GM12878 (cell line): ENCODE measurements at regions of chr6 and their contacts with region 1.

Region 1: GRCh38 chr6:109083657-109084056 is 11.0 kb downstream of the SESN1 start:
- DNase-seq: no peak
- ATAC-seq: no peak; the same call in 2 of the 3 replicates
- H3K4me3 ChIP-seq: no peak overlapping the region
- H3K27ac ChIP-seq: no peak overlapping the region
- H3K4me1 ChIP-seq: no peaks in the 10 kb centered on the region
- H3K27me3 ChIP-seq: no peaks in the 10 kb centered on the region
- CTCF ChIP-seq: no peak
- EP300 ChIP-seq: no peak
- POLR2A ChIP-seq: no peak
- RAD21 ChIP-seq: no peak

Region 2: DNA sequence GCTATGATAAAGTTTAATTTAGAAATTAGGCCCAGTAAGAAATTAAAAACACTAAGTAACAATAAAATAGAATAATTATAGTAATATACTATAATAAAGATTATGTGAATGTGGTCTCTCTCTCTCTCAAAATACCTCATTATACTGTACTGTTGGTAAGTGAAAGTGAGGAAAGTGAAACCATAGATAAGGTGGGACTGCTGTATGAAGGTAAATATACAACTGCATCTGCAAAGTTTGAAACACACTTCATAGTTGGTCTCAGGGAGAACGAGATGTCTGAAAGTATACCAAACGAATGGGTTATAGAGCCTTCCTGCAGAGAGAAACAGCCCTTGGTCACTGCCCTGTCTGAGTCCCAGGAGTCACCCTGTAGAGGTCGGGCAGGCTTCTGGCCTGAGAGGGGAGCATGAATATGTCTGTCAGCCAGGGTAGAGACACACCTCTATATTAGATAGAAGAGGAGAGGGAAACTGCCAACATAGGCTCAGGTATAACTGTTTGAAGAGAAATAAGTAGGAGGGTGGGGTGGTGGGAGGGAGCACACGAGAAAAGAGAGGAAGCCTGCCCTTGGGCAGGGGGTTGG is 20.8 kb before region 1 on chr6:
- CTCF ChIA-PET with region 1: no interaction called
- POLR2A ChIA-PET with region 1: no interaction called
- RAD21 ChIA-PET with region 1: no interaction called
- SMC1A ChIA-PET with region 1: no interaction called
- in situ Hi-C with region 1: no loop called
- intact Hi-C with region 1: no loop called
- DNase-seq: no peak
- ATAC-seq: no peak
- H3K4me3 ChIP-seq: no peak overlapping the region
- H3K27ac ChIP-seq: no peak overlapping the region
- H3K4me1 ChIP-seq: no peaks in the 10 kb centered on the region
- H3K27me3 ChIP-seq: no peaks in the 10 kb centered on the region; a peak in 2 of 4 replicates
- CTCF ChIP-seq: no peak
- EP300 ChIP-seq: no peak
- POLR2A ChIP-seq: no peak
- RAD21 ChIP-seq: no peak

Region 3: GRCh38 chr6:109095027-109095834 is 11.6 kb after region 1 on chr6 and contains the start of gene CEP57L1:
- CTCF ChIA-PET with region 1: interaction called, 4 read pairs
- POLR2A ChIA-PET with region 1: interaction called, 6 read pairs
- RAD21 ChIA-PET with region 1: interaction called, 3 read pairs
- SMC1A ChIA-PET with region 1: interaction called, 13 read pairs
- in situ Hi-C with region 1: no loop called
- intact Hi-C with region 1: no loop called
- DNase-seq: peak; percentile 88
- ATAC-seq: peak; percentile 81
- H3K4me3 ChIP-seq: peak within 1 kb of the TSS; percentile 90
- H3K27ac ChIP-seq: peak within 1 kb of the TSS; percentile 94
- H3K4me1 ChIP-seq: no peaks in the 10 kb centered on the region
- H3K27me3 ChIP-seq: no peaks in the 10 kb centered on the region
- CTCF ChIP-seq: peak; percentile 14 to 23 (median 14); a peak in 2 of 6 replicates
- EP300 ChIP-seq: no peak
- POLR2A ChIP-seq: peak; percentile 84
- RAD21 ChIP-seq: no peak
- polyA plus RNA-seq, gene CEP57L1: 22.6 to 24.0 TPM